ENCODE measurements at regions of chr2 and their contacts with region 1.

Region 1: DNA sequence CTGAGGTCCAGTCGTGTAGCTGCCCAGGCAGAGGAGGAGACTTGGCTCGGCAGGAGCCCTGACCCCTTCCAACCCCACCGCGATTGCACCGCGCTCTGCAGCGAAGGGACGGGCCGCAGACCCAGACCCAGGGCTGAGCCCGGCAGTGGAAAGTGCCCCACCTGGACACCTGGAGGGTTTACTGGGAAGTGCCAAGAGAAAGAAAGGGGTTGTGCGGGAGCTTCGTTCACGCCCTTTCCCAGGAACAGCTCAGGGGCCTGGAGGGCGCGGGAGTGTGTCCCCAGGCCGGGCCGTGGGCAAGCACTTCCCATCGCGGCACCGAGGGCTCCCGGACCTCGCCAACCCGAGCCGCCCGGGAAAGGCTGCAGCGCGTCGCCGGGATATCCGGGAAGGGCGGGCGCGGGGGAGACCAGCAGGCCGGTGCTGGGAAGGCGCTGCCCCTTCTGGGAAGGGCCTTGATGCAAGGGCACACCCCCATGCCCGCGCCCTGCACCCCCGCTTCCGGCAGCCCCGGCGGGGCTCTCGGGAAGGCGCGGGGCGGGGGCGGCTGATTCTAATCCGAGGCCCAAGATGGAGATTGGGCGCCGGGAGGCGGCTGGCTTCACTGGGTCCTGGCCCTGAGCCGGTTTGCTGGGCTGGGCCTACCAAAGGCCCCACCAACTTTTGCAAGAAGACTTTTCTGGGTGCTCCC is 36.1 kb upstream of the MRPL33 start:
- DNase-seq: no peak

Region 2: DNA sequence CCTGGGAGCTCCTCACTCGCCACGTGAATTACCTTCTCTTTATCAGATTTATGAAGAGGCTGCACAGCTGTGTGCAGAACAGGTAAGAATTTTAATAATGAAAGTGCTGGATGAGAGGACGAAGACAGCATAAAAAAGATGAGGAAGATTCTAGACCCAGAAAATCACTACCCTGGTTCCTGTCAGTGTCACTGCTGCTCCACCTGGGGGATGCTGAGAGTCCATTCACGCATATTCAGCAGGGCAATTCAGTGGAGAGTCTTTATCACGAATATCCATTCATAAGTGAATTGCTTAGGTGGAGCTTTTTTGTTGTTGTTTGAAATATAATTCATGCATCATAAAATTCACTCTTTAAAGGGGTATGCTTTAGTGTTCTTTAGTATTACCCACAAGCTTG is 88.2 kb after region 1 on chr2:
- in situ Hi-C with region 1: no loop called
- DNase-seq: no peak

Region 3: DNA sequence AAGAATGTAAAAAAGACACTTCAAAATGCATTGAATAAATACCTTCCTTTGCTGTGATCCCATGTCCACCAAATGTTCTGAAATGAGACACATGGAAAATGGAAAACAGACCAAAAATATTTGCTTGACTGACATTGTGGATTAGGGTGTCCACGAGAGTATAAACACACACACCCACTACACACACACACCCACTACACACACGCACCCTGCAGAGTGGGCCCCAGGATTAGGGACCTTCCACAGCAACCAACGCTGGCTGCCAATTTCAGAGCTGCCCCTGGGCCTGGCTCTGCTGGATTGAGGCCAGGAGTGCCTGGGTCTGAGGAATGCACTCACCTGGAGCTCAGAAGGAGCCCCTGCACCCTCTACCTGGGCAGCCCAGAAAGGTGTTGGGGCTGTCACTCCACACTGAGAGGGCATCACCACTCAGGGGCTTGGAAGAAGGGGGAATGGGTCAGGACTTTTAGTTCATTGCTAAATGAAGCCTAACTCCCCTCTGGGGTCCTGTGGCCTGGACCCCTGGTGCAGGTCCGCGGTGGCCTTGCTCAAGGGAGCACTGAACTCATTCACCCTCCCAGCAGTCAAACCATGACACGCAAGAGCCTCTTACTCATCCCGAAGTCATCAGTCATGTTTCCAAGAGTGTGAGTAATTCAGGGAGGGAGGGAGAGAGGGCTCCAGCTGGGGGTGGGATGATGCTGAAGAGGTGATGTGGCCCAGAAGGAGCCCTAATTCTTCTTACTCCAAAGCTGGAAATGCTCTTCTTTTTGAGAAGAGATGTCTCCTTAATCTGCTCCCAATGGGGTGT is 710.2 kb after region 1 on chr2:
- in situ Hi-C with region 1: loop called (anchors 25 kb)
- DNase-seq: no peak

Measured in KBM-7 (cell line).